ENCODE measurements at regions of chr17 and their contacts with region 1.

Region 1: GRCh38 chr17:29389982-29390850 is at the start of gene TAOK1:
- DNase-seq: peak; percentile 98 to 100 (median 99)

Region 2: GRCh38 chr17:29376667-29377270 is 13.4 kb before region 1 on chr17:
- intact Hi-C with region 1: loop called (anchors 2 kb)
- DNase-seq: peak; percentile 77 to 98 (median 84)

Measured in posterior cingulate gyrus (tissue), 11 donors.